ENCODE measurements at regions of chr14 and their contacts with region 1.

Region 1: GRCh38 chr14:53715193-53715721 is 241.4 kb downstream of the BMP4 start:
- DNase-seq: no peak
- ATAC-seq: no peak
- H3K4me3 ChIP-seq: no peak overlapping the region
- H3K27ac ChIP-seq: no peak overlapping the region
- H3K4me1 ChIP-seq: no peaks in the 10 kb centered on the region
- H3K27me3 ChIP-seq: no peaks in the 10 kb centered on the region
- CTCF ChIP-seq: no peak

Region 2: DNA sequence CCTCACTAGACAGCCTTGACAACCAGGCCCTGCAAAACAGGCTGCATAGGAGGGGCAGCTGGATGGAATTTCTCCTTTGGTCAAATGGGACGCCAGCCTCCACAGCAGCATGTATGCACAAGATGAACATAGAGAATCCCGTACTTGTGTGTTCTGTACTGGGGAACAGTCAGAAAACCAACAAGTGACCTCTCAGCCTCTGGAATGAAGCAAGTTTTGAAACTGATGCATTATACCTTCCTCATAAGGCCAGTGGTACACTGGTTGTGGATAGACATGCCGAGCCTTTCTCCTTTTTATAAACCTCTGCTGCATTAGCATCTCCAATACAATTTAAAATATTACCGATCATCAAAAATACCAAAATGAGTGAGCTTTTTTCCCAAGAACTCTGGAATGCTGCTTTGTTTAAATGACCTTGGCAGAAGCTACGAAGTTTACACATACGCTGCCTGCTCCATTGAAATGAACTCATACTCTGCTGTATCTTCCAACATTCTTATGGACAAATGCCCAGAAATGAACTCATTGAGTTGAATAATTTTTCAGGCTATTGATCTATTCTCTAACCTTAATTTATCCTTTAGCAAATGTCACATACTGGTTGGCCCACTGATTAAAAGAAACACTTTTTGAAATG is 716.8 kb before region 1 on chr14:
- CTCF ChIA-PET with region 1: no interaction called
- POLR2A ChIA-PET with region 1: interaction called, 12 read pairs
- in situ Hi-C with region 1: no loop called
- intact Hi-C with region 1: no loop called
- DNase-seq: no peak
- ATAC-seq: no peak
- H3K4me3 ChIP-seq: no peak overlapping the region
- H3K27ac ChIP-seq: no peak overlapping the region
- H3K4me1 ChIP-seq: no peaks in the 10 kb centered on the region
- H3K27me3 ChIP-seq: no peaks in the 10 kb centered on the region
- CTCF ChIP-seq: no peak